ENCODE measurements at regions of chr20 and their contacts with region 1.

Region 1: GRCh38 chr20:38962044-38962927 is at the start of gene DHX35:
- DNase-seq: peak; percentile 83
- H3K4me3 ChIP-seq: peak within 1 kb of the TSS; percentile 93
- H3K27ac ChIP-seq: peak within 1 kb of the TSS; percentile 82
- H3K27me3 ChIP-seq: no peaks in the 10 kb centered on the region
- CTCF ChIP-seq: peak; percentile 51
- polyA plus RNA-seq, gene DHX35: 13.5 and 14.4 TPM in 2 replicates

Region 2: GRCh38 chr20:38714308-38714707 is 248.0 kb before region 1 on chr20:
- CTCF ChIA-PET with region 1: no interaction called
- POLR2A ChIA-PET with region 1: no interaction called
- DNase-seq: no peak
- H3K4me3 ChIP-seq: no peak overlapping the region
- H3K27ac ChIP-seq: no peak overlapping the region
- H3K27me3 ChIP-seq: peaks cover 16% of the 10 kb centered on the region
- CTCF ChIP-seq: no peak

Region 3: GRCh38 chr20:38893565-38894090 is 68.7 kb before region 1 on chr20:
- CTCF ChIA-PET with region 1: no interaction called
- POLR2A ChIA-PET with region 1: no interaction called
- DNase-seq: no peak
- H3K4me3 ChIP-seq: no peak overlapping the region
- H3K27ac ChIP-seq: no peak overlapping the region
- H3K27me3 ChIP-seq: peaks cover 18% of the 10 kb centered on the region
- CTCF ChIP-seq: peak; percentile 90

Region 4: DNA sequence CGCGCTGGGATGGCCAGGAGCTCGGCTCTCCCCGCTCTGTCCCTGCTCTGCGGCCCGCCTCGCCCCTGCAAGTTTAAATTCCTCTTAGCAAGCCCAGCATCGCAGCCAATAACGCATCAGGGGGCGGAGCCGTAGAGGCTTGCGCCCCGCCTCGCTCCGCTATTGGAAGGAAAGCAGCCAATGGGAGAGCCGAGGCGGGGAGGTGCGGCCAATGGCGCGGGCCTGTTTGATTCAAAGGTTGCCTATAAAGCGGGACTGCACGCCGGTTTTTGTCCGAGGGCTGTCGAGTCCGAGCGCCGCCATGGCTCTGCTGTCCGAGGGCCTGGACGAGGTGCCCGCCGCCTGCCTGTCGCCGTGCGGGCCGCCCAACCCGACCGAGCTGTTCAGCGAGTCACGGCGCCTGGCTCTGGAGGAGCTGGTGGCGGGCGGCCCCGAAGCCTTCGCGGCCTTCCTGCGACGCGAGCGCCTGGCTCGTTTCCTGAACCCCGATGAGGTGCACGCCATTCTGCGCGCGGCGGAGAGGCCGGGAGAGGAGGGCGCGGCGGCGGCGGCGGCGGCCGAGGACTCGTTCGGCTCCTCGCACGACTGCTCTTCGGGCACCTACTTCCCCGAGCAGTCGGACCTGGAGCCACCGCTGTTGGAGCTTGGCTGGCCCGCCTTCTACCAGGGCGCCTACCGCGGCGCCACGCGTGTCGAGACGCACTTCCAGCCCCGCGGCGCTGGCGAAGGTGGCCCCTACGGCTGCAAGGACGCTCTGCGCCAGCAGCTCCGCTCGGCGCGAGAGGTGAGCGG is 35.9 kb before region 1 on chr20 and contains the start of gene FAM83D:
- CTCF ChIA-PET with region 1: interaction called, 12 read pairs
- POLR2A ChIA-PET with region 1: interaction called, 18 read pairs
- DNase-seq: peak; percentile 95
- H3K4me3 ChIP-seq: peak within 1 kb of the TSS; percentile 78
- H3K27ac ChIP-seq: no peak within 1 kb of the TSS
- H3K27me3 ChIP-seq: peaks cover 8% of the 10 kb centered on the region
- CTCF ChIP-seq: no peak
- polyA plus RNA-seq, gene FAM83D: 10.5 and 14.9 TPM in 2 replicates

Region 5: GRCh38 chr20:38973645-38974044 is 11.4 kb after region 1 on chr20:
- CTCF ChIA-PET with region 1: interaction called, 12 read pairs
- POLR2A ChIA-PET with region 1: interaction called, 3 read pairs
- DNase-seq: no peak
- H3K4me3 ChIP-seq: peak overlapping the region; percentile 14
- H3K27ac ChIP-seq: peak overlapping the region; percentile 68
- H3K27me3 ChIP-seq: no peaks in the 10 kb centered on the region
- CTCF ChIP-seq: no peak

Region 6: GRCh38 chr20:38982316-38982715 is 20.0 kb after region 1 on chr20:
- CTCF ChIA-PET with region 1: interaction called, 12 read pairs
- POLR2A ChIA-PET with region 1: interaction called, 3 read pairs
- DNase-seq: no peak
- H3K4me3 ChIP-seq: no peak overlapping the region
- H3K27ac ChIP-seq: no peak overlapping the region
- H3K27me3 ChIP-seq: no peaks in the 10 kb centered on the region
- CTCF ChIP-seq: no peak